ENCODE measurements at regions of chr21 and their contacts with region 1.

Region 1: DNA sequence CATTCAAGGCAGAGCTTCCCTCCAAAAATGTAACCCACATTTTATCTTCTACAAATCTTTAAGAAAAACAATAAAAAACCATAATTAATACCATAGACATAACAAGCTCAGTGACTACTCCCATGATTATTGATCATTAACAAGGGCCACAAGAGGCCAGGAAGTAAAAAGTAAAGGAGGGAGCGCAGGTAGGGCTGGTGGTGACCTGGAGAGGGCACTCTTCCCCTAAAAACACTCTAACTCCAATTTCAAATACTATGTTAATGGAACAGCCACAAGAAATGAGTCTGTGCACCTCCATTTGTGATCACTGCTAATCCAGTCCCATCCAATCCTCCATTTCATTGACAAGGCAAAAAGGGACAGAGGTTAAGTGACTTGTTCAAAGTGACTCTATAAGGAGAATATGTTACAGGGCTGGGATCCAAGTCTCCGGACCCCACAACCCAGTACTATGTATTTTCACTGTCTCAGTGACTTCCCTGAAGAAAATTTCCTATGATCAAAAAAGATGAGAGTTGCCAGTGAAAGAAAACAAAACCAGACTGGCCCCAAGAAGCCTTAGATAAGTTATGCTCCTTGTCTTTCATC is 41.2 kb upstream of the CFAP298 start:
- DNase-seq: peak; percentile 15
- ATAC-seq: peak; percentile 86
- H3K4me3 ChIP-seq: no peak overlapping the region
- H3K27ac ChIP-seq: no peak overlapping the region
- H3K4me1 ChIP-seq: no peaks in the 10 kb centered on the region
- H3K27me3 ChIP-seq: no peaks in the 10 kb centered on the region
- CTCF ChIP-seq: peak; percentile 36 to 84 (median 78); a peak in 4 of 6 replicates
- POLR2A ChIP-seq: no peak
- RAD21 ChIP-seq: peak; percentile 69

Region 2: GRCh38 chr21:32826329-32827167 is 173.1 kb after region 1 on chr21:
- CTCF ChIA-PET with region 1: interaction called, 15 read pairs
- POLR2A ChIA-PET with region 1: no interaction called
- RAD21 ChIA-PET with region 1: no interaction called
- intact Hi-C with region 1: loop called (anchors 1 kb)
- DNase-seq: peak; percentile 60
- ATAC-seq: peak; percentile 98
- H3K4me3 ChIP-seq: no peak overlapping the region
- H3K27ac ChIP-seq: no peak overlapping the region
- H3K4me1 ChIP-seq: peaks cover 0 to 3% of the 10 kb centered on the region in 2 experiments; a peak in 1 of 4 replicates
- H3K27me3 ChIP-seq: no peaks in the 10 kb centered on the region
- CTCF ChIP-seq: peak; percentile 57 to 68 (median 67); a peak in 5 of 6 replicates
- POLR2A ChIP-seq: no peak
- RAD21 ChIP-seq: peak; percentile 71

Region 3: DNA sequence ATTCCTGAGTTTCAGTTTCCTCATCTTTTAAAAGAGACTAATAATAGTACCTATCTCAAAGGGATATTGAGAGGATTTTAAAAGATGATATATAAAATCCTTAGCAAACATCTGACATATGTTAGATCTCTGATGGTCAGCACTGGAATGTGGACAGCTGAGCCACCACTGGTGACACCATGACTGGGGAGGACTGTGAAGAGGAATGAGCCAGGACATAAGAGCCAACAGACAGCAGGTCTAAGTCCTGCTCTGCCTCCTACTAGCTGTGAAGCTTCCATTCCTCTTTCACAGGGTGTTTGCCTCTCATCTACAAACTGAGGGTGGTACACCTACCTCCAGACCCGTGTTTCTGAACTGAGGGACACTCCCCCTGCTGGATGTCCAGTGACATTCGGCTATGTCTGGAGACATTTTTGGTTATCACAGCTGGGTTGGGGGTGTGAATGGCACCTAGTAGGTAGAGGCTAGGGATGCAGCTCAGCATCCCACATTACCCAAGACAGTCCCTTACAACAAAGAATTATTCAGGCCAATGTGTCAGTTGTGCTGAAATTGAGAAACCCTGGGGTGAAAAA is 263.2 kb after region 1 on chr21:
- CTCF ChIA-PET with region 1: no interaction called
- POLR2A ChIA-PET with region 1: no interaction called
- RAD21 ChIA-PET with region 1: no interaction called
- intact Hi-C with region 1: loop called (anchors 1 kb)
- DNase-seq: peak; percentile 15
- ATAC-seq: peak; percentile 80
- H3K4me3 ChIP-seq: no peak overlapping the region
- H3K27ac ChIP-seq: no peak overlapping the region
- H3K4me1 ChIP-seq: no peaks in the 10 kb centered on the region
- H3K27me3 ChIP-seq: peaks cover 24% of the 10 kb centered on the region; the same call in 1 of the 2 replicates
- CTCF ChIP-seq: peak; percentile 15 to 78 (median 69); a peak in 5 of 6 replicates
- POLR2A ChIP-seq: no peak
- RAD21 ChIP-seq: peak; percentile 38; the same call in 1 of the 2 replicates

Measured in HCT116 (cell line).